Activated naive CD4-positive, alpha-beta T cell treated with anti-CD3 and anti-CD28 coated beads for 36 hours (primary cell): ENCODE measurements at regions of chr12 and their contacts with region 1.

Region 1: GRCh38 chr12:11075642-11076041 is 13.5 kb upstream of the TAS2R46 start:
- DNase-seq: no peak
- H3K4me3 Mint-ChIP-seq: no peak overlapping the region
- H3K27ac Mint-ChIP-seq: no peak overlapping the region
- H3K4me1 Mint-ChIP-seq: peaks cover 4% of the 10 kb centered on the region
- H3K27me3 Mint-ChIP-seq: no peaks in the 10 kb centered on the region

Region 2: GRCh38 chr12:11015775-11016430 is 59.7 kb before region 1 on chr12:
- CTCF ChIA-PET with region 1: no interaction called
- intact Hi-C with region 1: loop called (anchors 1 kb)
- DNase-seq: no peak
- H3K4me3 Mint-ChIP-seq: no peak overlapping the region
- H3K27ac Mint-ChIP-seq: no peak overlapping the region
- H3K4me1 Mint-ChIP-seq: no peaks in the 10 kb centered on the region
- H3K27me3 Mint-ChIP-seq: no peaks in the 10 kb centered on the region